ENCODE measurements at regions of chr12 and their contacts with region 1.

Region 1: GRCh38 chr12:94149119-94149780 is 873 bp downstream of the PLXNC1 start:
- DNase-seq: peak; percentile 52 to 75 (median 69)
- H3K4me3 ChIP-seq: peak overlapping the region; percentile 60
- H3K27ac ChIP-seq: peak overlapping the region in 1 of 2 donors; percentile 72
- H3K4me1 ChIP-seq: peaks cover 1% of the 10 kb centered on the region
- H3K27me3 ChIP-seq: no peaks in the 10 kb centered on the region
- CTCF ChIP-seq: peak in 1 of 3 donors; percentile 54
- EP300 ChIP-seq: no peak
- POLR2A ChIP-seq: no peak

Region 2: GRCh38 chr12:94195443-94195842 is 46.2 kb after region 1 on chr12:
- intact Hi-C with region 1: loop called in 2 of 4 experiments (anchors 5 to 10 kb)
- DNase-seq: no peak
- H3K4me3 ChIP-seq: no peak overlapping the region
- H3K27ac ChIP-seq: no peak overlapping the region
- H3K4me1 ChIP-seq: no peaks in the 10 kb centered on the region
- H3K27me3 ChIP-seq: no peaks in the 10 kb centered on the region
- CTCF ChIP-seq: no peak
- EP300 ChIP-seq: no peak
- POLR2A ChIP-seq: no peak

Region 3: DNA sequence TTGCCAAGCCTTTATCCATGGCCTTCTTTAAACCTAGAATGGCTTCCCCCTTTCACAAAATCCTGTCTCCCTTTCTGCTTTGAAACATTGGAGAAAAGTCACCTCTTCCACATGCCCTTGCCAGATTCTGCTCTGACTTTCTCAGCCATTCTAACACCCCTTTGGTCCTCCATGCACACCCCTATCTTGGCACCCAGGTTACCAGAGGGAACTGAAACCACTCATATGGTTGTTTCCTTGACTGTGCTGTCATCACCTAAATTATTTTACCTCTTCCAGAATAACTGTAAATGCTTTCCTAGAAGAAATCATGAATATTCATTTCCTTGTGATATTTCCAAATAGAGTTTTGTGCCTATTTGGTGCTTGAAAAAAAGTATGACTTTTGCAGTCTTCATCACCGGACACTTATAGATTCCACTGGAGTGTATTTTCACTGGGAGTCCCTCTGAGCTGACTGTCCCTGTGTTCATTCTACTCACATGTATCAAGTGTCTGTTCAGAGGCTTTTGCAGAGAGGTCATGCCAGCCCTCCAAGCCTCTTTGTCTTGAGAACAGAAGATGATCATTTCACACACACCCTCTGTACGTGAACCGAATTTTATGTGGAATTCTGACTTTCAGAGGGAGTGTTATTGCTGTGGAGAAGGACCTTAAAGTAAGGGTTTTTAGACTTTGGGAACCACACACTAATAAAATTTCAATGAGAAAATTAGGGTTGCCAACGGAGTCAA is 73.3 kb after region 1 on chr12:
- intact Hi-C with region 1: no loop called
- DNase-seq: no peak
- H3K4me3 ChIP-seq: no peak overlapping the region
- H3K27ac ChIP-seq: no peak overlapping the region
- H3K4me1 ChIP-seq: no peaks in the 10 kb centered on the region
- H3K27me3 ChIP-seq: no peaks in the 10 kb centered on the region
- CTCF ChIP-seq: no peak
- EP300 ChIP-seq: no peak
- POLR2A ChIP-seq: no peak

Region 4: DNA sequence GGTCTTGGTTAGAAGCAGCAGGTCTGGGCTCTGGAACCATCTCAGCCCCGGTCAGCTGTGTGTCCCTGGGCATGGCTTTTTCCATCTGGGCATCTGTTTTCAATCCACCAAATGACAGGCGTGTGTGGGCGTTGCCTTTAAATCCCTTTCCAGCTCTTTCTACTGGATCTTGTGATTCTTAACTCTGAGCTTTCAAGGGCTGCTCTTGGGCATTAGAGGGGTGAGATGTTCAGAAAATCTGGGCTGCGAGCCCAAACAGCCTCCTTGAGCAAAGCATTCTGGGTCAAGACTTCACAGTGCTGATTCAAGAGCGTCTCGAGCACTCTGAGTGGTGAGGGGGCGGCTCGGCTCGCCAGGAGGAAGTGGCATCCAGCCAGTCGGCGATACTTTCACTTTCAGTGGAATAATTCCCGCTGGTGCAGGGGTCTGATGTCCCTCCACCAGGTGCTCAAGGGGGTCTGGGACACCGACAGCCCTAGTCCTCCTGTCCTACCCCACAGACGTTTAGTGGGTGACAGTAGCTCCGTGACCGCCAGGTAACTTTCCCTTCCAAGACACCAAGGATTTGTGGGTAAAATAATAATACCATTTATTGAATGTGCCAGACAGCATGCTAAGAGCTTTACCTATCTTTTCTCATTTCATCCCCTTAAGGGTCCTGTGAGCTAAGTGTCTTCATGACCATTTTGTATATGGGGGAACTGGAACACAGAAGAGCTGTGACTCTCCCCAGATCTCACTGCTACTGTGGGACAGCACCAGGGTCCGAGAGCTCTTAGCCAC is 113.2 kb after region 1 on chr12:
- intact Hi-C with region 1: loop called in 2 of 4 experiments (anchors 5 kb)
- DNase-seq: peak; percentile 93 to 97 (median 96)
- H3K4me3 ChIP-seq: peak overlapping the region; percentile 56
- H3K27ac ChIP-seq: peak overlapping the region; percentile 82 to 84
- H3K4me1 ChIP-seq: peaks cover 10% of the 10 kb centered on the region
- H3K27me3 ChIP-seq: no peaks in the 10 kb centered on the region
- CTCF ChIP-seq: no peak
- EP300 ChIP-seq: no peak
- POLR2A ChIP-seq: peak; percentile 41

Region 5: GRCh38 chr12:94282675-94283074 is 133.4 kb after region 1 on chr12:
- intact Hi-C with region 1: no loop called
- DNase-seq: no peak
- H3K4me3 ChIP-seq: no peak overlapping the region
- H3K27ac ChIP-seq: no peak overlapping the region
- H3K4me1 ChIP-seq: peaks cover 2% of the 10 kb centered on the region
- H3K27me3 ChIP-seq: no peaks in the 10 kb centered on the region
- CTCF ChIP-seq: no peak
- EP300 ChIP-seq: no peak
- POLR2A ChIP-seq: no peak

Region 6: GRCh38 chr12:94532490-94533422 is 383.5 kb after region 1 on chr12:
- intact Hi-C with region 1: loop called in 3 of 4 experiments (anchors 5 kb)
- DNase-seq: peak; percentile 64 to 83 (median 83)
- H3K4me3 ChIP-seq: no peak overlapping the region
- H3K27ac ChIP-seq: no peak overlapping the region
- H3K4me1 ChIP-seq: no peaks in the 10 kb centered on the region
- H3K27me3 ChIP-seq: no peaks in the 10 kb centered on the region
- CTCF ChIP-seq: peak; percentile 62 to 81 (median 64)
- EP300 ChIP-seq: no peak
- POLR2A ChIP-seq: no peak

Region 7: DNA sequence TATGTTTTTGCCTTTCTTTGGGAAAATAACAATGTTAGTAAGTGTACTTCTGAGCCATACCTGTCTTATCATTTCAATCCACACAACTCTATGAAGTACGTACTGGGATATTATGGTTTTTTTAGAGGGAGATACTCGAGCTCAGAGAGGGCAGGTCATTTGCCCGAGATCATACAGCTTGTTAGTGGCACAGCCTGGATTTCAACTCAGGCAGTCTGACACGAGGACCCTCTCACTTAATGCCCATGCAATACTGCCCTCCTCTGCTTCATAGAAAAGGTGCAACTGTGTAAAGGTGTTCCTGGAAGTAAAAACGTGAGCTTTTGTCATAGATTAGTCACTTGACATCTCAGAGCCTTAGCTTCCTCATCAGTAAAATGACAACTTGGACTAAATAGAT is 726.3 kb after region 1 on chr12:
- intact Hi-C with region 1: loop called in 1 of 4 experiments (anchors 10 kb)
- DNase-seq: peak in 1 of 5 donors; percentile 23
- H3K4me3 ChIP-seq: no peak overlapping the region
- H3K27ac ChIP-seq: no peak overlapping the region
- H3K4me1 ChIP-seq: peaks cover 3% of the 10 kb centered on the region
- H3K27me3 ChIP-seq: no peaks in the 10 kb centered on the region
- CTCF ChIP-seq: peak in 1 of 3 donors; percentile 27
- EP300 ChIP-seq: no peak
- POLR2A ChIP-seq: no peak

Region 8: GRCh38 chr12:94973221-94973620 is 824.0 kb after region 1 on chr12:
- intact Hi-C with region 1: no loop called
- DNase-seq: no peak
- H3K4me3 ChIP-seq: no peak overlapping the region
- H3K27ac ChIP-seq: no peak overlapping the region
- H3K4me1 ChIP-seq: peaks cover 3% of the 10 kb centered on the region
- H3K27me3 ChIP-seq: no peaks in the 10 kb centered on the region
- CTCF ChIP-seq: no peak
- EP300 ChIP-seq: no peak
- POLR2A ChIP-seq: no peak

Region 9: DNA sequence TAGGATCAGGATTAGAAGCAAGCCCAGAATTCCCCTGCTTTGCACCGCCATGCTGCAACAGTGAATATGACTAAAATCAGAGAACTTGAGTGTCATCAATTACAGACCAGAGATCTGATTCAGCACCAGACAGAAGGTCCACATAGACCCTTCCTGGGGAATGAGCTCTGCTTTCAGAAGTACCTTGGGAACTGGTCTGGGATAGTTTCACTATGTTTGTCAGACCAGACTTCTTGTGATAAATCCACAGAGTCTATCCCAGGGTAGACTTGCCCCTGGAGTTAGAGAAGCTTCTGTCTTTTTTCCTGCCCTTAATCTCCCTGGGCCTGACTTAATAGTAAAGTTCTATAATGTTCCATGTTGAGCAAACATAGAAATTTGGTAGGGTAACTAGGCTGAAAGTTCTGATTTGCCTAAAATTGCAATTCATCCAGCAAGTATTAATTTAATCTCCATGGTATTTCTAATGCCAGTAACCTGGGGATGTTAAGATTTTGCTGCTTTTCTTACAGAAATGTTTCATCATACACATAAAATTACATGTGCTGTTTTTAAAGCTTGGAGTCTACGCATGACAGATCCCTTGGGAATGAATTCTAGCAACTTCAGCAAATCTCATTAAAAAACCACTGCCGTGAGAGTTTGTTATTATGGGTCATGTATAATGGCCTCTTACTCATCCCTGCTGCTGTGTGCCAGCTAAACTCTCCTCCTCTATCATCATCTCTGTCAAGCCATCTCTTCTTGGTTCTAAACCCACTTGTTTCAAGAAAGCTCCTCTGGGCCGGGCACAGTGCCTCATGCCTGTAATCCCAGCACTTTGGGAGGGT is 1263.4 kb after region 1 on chr12:
- intact Hi-C with region 1: no loop called
- DNase-seq: peak in 1 of 5 donors; percentile 10
- H3K4me3 ChIP-seq: no peak overlapping the region
- H3K27ac ChIP-seq: no peak overlapping the region
- H3K4me1 ChIP-seq: no peaks in the 10 kb centered on the region
- H3K27me3 ChIP-seq: no peaks in the 10 kb centered on the region
- CTCF ChIP-seq: no peak
- EP300 ChIP-seq: no peak
- POLR2A ChIP-seq: no peak